ENCODE measurements at regions of chr19 and their contacts with region 1.

Region 1: DNA sequence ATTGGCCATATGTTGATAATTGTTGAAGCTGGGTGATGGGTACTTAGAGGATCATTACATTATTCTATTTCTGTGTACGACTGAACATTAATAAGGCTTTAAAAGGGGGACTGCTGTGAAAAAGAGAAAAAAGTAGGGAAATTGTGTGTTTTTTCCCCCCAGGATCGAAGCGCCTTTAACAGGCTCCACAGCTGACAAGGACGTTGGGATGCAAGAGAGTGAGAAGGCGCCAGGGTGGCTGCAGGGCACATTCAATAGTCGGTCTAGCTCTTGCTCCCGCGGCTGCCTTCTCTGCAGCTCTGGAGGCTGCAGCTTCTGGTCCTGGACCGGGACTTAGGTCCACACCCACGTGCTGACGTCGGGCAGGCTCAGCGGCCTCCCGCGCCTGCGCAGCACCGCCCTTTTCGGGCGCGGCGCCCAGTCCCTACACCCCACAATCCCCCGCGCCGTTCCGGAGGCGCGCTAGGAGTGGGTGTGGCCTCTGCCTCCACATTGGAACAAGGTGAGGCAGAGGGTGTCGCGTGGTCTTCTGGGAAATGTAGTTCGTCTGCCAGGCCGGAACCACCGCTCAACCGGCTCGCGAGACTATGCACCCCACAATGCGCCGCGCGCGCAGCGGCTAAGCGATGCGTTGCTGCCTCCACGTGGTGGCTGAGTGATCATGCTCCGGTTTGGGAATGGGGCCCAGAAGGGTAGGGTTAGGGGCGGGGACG is 4.9 kb upstream of the LRFN3 start:
- DNase-seq: peak; percentile 100
- H3K4me3 Mint-ChIP-seq: peak overlapping the region; percentile 81
- H3K27ac Mint-ChIP-seq: peak overlapping the region; percentile 93
- H3K4me1 Mint-ChIP-seq: peaks cover 32% of the 10 kb centered on the region
- H3K27me3 Mint-ChIP-seq: no peaks in the 10 kb centered on the region

Region 2: GRCh38 chr19:35693830-35694599 is 237.3 kb before region 1 on chr19:
- CTCF ChIA-PET with region 1: interaction called, 5 read pairs
- intact Hi-C with region 1: loop called (anchors 1 kb)
- DNase-seq: peak; percentile 97
- H3K4me3 Mint-ChIP-seq: no peak overlapping the region
- H3K27ac Mint-ChIP-seq: peak overlapping the region; percentile 77
- H3K4me1 Mint-ChIP-seq: peaks cover 24% of the 10 kb centered on the region
- H3K27me3 Mint-ChIP-seq: no peaks in the 10 kb centered on the region

Region 3: GRCh38 chr19:35740423-35741202 is 190.7 kb before region 1 on chr19:
- CTCF ChIA-PET with region 1: interaction called, 3 read pairs
- intact Hi-C with region 1: loop called (anchors 1 kb)
- DNase-seq: peak; percentile 99
- H3K4me3 Mint-ChIP-seq: peak overlapping the region; percentile 89
- H3K27ac Mint-ChIP-seq: peak overlapping the region; percentile 97
- H3K4me1 Mint-ChIP-seq: peaks cover 41% of the 10 kb centered on the region
- H3K27me3 Mint-ChIP-seq: no peaks in the 10 kb centered on the region

Region 4: DNA sequence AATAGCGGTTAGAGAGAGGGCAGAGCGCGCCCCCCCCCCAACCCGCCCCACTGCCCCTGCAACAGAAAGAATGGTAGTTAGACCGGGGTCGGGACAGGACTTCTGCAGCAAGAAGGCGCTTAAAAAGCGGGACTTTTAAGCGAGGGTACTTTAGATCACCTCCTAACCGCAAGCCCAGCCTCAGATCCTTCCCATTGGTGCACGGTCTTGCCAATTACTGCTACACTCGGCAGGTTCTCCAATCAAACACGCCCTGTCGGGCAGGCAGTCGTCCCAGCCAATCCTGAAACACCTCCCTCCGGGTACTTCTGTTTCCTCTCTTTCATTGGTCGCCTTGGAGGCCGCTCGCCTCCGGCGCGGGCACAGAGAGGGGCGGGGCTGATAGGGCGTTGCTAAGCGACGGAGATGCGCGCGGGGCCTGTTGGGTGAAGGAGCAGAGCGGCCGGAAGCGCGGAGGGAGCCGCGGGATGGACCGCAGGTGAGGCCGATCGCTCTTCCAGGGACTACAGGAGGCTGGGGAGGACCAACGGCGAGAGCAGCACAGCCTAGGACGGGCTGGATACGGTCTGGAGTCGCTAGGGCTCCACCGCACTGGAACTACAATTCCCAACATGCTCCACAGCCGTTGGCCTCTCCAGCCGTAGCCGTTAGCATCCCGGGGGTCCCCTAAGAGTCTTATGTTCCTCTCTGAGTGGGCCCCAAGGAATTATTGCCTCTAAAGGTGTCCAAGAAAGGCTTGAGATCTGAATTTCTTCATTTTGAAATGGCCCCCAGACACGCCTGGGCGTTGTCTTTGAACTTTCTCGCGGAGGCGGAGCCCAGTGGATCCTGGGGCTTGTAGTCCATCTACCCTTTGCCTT is 173.3 kb before region 1 on chr19 and contains the start of gene PROSER3:
- CTCF ChIA-PET with region 1: interaction called, 3 read pairs
- intact Hi-C with region 1: loop called (anchors 1 kb)
- DNase-seq: peak; percentile 99
- H3K4me3 Mint-ChIP-seq: peak within 1 kb of the TSS; percentile 90
- H3K27ac Mint-ChIP-seq: peak within 1 kb of the TSS; percentile 92
- H3K4me1 Mint-ChIP-seq: peaks cover 20% of the 10 kb centered on the region
- H3K27me3 Mint-ChIP-seq: peaks cover 8% of the 10 kb centered on the region
- total RNA-seq, gene PROSER3: 45.3 to 47.4 TPM

Region 5: DNA sequence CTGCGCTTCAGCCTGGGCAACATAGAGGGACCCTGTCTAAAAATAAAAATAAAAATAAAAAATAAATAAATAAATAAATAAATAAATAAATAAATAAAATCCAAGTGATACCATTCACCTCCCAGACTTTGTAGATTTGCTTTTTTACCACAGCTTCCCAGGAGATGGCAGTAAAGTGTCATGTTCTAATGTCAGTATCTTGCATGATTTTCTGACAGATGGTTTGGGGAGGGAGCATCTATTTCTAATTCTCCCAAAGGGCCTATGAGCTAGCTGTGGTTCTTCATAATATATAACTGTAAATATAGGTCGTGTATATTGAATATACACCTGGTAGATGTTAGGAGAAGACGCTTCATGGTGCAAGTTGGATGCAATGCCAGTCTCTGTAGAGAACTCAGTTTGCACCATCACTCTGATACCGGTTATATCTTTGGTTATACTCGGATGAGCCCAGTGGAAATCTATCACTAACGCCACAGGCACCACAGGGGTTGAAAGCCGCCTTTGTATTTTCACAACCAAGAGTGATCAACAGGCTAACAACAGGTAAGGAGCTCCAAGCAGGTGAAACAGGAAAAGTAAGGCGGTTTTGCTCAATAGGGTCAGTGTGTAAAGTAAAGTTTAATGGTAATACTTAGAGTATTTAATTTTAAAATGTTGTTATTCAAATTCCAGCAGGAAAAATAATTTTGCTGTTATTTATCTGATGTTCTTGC is 49.0 kb before region 1 on chr19:
- CTCF ChIA-PET with region 1: interaction called, 69 read pairs
- intact Hi-C with region 1: loop called (anchors 1 kb)
- DNase-seq: peak; percentile 58
- H3K4me3 Mint-ChIP-seq: no peak overlapping the region
- H3K27ac Mint-ChIP-seq: no peak overlapping the region
- H3K4me1 Mint-ChIP-seq: peaks cover 9% of the 10 kb centered on the region
- H3K27me3 Mint-ChIP-seq: peaks cover 21% of the 10 kb centered on the region

Region 6: DNA sequence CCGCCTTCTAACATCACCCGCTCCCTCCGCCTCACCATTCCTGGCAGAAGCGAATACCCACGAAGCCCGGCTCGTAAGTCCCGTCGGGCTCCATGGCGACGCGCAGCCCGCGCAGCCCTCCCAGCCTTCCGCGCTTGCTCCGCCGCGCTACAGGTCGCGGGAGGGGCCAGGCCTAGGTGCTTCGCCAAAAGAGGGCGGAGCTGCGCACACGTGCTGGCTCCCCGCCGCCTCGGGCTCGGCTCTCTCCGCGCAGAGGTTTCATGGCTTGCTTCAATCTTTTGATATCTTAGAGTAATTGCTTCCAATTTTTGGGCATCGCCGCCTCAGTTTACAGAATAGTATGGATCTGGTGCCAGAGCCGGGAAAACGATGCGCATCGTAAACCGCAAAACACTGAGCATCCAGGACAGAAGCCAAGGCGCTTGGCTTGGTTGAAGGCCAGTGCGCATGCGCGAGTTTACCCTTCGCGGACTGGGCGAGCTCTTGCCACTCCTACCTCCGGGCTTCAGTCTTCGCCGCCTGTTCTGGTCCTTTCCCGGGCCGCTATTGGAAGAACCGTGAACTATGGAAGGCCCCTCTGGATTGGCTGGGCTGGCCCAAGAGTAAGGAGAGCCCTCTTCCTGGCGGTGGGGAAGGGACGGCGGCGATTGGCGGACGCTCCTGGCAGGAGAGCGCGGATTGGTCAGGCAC is 183.6 kb after region 1 on chr19 and contains the start of gene POLR2I:
- CTCF ChIA-PET with region 1: no interaction called
- intact Hi-C with region 1: loop called (anchors 1 kb)
- DNase-seq: peak; percentile 99
- H3K4me3 Mint-ChIP-seq: peak within 1 kb of the TSS; percentile 99
- H3K27ac Mint-ChIP-seq: peak within 1 kb of the TSS; percentile 91
- H3K4me1 Mint-ChIP-seq: peaks cover 31% of the 10 kb centered on the region
- H3K27me3 Mint-ChIP-seq: no peaks in the 10 kb centered on the region
- total RNA-seq, gene POLR2I: 86.8 to 87.4 TPM